ENCODE measurements at regions of chr1 and their contacts with region 1.

Region 1: DNA sequence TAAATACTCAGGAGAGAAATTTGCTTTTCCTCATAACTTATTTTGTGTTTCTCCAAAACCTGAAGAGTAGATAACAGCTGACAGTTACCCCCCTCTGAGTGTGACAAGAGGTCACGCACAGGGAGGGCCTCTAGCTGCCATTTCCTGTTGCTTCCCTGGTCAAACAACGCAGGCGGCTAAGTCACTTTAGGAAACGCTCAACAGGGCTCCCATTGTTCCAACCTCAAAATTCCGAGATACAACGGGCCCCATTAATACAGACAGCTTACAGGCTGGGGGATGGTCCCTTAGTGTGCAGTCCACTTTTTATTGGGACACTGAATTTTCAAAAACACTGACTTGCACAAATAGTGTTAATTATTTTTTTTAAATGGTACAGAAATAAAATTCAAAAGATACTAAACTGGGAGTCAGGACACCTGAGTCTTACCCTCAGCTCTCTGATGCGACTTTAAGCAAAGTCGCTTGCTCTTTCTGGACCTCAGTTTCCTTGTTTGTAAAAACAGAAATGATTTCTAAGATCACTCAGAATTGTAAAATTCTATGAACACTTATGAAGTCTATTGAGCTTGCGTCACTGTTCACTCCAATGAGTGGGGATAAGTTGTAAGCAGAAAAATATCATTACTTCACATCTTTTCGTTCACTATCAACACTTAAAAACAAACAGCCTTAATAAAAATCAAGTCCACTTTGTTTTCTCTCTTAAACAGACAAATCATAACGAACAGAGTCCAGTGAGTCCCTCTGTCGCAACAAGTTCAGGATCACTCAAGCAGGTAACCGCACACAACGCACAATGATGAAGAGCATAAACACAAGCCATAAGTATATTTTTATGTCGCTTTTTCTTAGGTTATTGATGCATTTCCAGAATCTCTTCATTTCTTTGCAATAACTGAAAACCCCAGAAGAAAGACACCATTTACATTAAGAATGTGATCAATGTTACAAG is 13.5 kb downstream of the LZIC start:
- DNase-seq: no peak
- ATAC-seq: no peak
- H3K4me3 ChIP-seq: no peak overlapping the region
- H3K4me3 Mint-ChIP-seq: no peak overlapping the region
- H3K27ac ChIP-seq: no peak overlapping the region
- H3K27ac Mint-ChIP-seq: no peak overlapping the region
- H3K4me1 ChIP-seq: no peaks in the 10 kb centered on the region
- H3K4me1 Mint-ChIP-seq: no peaks in the 10 kb centered on the region
- H3K27me3 ChIP-seq: no peaks in the 10 kb centered on the region
- H3K27me3 Mint-ChIP-seq: no peaks in the 10 kb centered on the region
- CTCF ChIP-seq: no peak

Region 2: DNA sequence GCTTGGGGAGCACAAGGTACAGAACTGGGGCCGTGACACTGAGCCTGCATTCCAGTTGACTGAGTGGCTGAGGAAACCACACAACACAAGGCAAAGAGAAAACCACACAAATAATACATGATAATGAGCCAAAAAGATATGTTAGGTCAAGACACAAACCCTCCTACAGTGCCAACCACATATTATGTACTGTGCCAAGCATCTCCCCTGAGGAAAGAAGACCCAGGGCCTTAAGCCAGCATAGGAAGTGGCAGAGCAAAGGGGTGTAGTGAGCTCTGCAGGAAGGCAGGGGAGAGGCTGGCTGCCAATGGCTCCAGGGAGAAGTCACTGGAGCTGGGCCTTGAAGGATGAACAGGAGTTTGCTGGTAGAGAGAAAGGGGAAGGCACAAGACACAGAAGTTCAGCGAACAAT is 47.9 kb before region 1 on chr1:
- CTCF ChIA-PET with region 1: no interaction called
- POLR2A ChIA-PET with region 1: no interaction called
- intact Hi-C with region 1: loop called in 1 of 2 experiments (anchors 2 kb)
- DNase-seq: no peak
- ATAC-seq: peak; percentile 44
- H3K4me3 ChIP-seq: no peak overlapping the region
- H3K4me3 Mint-ChIP-seq: peak overlapping the region; percentile 50
- H3K27ac ChIP-seq: peak overlapping the region; percentile 7 to 81
- H3K27ac Mint-ChIP-seq: peak overlapping the region; percentile 87
- H3K4me1 ChIP-seq: peaks cover 23% of the 10 kb centered on the region
- H3K4me1 Mint-ChIP-seq: peaks cover 19% of the 10 kb centered on the region
- H3K27me3 ChIP-seq: no peaks in the 10 kb centered on the region
- H3K27me3 Mint-ChIP-seq: no peaks in the 10 kb centered on the region
- CTCF ChIP-seq: no peak

Region 3: DNA sequence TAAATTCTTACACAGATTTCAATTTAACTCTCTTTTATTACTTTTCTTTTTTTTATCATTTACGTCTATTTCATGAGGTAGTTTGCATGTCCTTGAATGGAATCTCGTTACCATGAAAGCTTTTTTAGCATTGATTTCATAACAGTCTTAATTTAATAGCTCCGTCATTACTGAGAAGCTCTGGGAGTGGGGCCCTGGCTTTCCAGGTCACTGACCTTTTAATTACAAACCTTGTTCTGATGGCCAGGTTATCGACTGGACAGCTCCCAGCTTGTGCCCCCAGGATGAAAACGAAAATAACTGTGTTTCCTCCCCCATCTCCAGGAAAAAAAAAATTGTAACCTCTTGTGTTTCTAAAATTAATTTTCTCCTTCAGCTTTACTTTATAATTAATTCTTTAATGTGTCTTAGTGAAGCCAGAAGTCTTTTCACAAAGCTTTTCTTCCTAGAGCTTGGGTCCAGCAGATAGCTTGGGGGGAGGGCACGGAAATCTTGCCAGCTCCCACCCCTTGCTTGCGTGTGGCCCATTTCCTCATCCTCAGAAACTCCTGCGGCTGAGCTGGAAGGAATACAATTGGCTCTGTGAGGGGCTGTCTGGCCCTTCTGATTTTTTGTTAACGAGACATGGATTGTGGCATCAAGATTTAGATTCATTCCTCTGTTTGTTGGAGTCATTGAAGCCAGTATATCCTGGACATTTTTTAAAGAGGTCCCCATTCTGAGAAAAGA is 610.7 kb after region 1 on chr1:
- CTCF ChIA-PET with region 1: no interaction called
- POLR2A ChIA-PET with region 1: no interaction called
- intact Hi-C with region 1: no loop called
- DNase-seq: no peak
- ATAC-seq: no peak
- H3K4me3 ChIP-seq: no peak overlapping the region
- H3K4me3 Mint-ChIP-seq: no peak overlapping the region
- H3K27ac ChIP-seq: no peak overlapping the region
- H3K27ac Mint-ChIP-seq: no peak overlapping the region
- H3K4me1 ChIP-seq: peaks cover 18% of the 10 kb centered on the region
- H3K4me1 Mint-ChIP-seq: peaks cover 29% of the 10 kb centered on the region
- H3K27me3 ChIP-seq: no peaks in the 10 kb centered on the region
- H3K27me3 Mint-ChIP-seq: no peaks in the 10 kb centered on the region
- CTCF ChIP-seq: no peak